ENCODE measurements at regions of chrX and their contacts with region 1.

Region 1: DNA sequence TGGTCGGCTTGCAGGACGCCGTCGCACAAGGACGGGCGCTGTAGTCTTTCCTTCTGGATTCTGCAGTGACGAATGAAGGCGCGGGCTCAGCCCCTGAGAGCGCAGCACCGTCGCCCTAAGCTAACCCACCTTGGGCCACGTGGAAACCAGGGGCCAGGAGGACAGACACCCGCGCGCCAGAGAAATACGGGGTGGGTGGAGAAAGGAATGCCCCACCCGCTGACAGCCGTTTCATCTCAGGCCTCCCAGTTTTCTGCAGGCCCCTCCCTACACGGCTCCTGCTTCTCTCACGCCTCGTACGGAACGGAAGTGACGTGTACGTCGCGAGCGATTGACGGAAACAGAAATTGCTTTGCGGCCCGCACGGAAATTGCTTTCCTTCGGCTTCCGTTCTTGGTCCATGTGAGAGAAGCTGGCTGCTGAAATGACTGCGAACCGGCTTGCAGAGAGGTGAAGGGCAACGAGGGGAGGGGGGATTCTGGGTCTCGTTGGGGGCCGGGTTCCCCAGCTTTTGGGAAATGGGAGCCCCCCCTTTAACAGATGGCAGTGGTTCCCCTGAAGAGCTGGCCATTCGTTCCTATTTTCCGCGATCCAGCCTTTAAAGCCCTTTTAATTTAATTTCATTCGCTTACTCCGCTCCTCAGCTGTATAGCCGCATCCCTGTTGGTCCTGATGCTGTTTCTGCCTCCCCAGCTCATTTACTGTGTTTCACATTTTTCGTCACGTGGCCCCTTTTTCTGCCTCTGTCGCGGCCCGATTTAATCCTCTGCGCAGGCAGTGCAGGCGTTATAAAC is at the start of gene UTP14A:
- DNase-seq: peak; percentile 96
- total RNA-seq, gene UTP14A: 13.2 to 14.3 TPM

Region 2: DNA sequence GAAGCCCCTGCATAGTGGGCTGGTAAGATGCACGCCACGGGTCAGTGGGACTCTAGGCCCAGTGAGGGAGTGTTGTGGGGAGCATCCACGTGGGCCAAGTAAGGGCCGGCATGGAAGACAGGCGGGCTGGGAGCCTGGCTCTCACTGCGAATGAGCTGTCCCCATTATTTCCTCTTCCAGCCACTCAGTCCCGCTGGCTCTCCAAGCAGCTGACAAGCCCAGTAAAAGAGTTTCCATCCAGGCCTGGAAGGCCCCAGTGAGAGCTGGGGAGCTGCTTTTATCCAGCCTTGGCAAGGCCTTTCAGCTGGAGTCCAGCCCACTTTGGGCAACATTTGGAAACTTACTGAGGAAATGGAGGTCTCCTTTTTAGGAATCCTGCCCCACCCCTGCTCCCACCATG is 276.1 kb before region 1 on chrX:
- intact Hi-C with region 1: loop called in 1 of 2 experiments (anchors 5 kb)
- DNase-seq: no peak

Region 3: DNA sequence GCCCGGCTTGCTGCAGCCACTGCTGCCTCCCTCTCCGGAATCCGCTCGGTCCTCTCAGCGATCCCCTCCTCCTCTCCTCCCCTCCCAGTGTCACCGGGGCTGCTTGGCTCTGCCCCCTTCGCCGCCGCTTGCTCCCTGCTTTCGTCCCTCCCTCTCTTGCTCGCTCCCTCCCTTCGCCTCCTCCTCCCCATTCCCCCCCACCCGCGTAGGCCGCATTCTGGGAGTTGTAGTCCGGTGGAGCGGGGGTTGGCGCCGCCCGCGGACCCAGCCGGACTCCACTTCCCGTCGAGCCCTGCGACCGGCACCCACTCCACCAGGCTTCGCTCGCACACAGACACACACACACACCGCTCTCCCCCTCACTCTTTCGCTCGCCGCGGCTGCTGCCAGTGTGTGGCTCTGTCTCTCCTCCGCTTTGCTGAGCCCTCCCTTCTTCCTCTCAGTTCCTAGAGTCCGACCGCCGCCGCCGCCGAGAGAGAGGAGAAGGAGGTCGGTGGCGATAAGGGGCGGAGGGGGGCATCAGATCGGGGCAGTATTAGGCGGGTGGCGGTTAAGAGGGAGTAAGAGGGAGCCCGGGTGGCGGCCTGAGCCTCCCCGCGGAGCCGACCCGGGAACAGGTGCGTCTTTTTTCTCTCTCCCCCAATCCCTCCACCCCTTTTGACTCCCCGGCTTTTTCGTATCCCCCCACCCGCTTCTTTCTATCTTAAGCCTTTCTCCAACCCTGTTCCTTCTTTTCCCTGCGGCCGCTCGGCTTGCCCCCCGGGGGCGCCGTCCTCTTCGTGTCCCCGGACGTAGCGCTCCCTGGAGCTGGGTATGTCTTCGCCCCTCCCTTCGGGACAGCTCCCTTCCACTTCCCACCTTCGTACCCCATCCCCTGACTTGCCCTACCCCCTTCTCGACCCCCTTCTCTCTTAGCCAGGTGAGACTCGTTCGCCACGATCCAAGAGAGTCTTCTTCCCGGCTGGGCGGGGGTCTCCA is 76.6 kb after region 1 on chrX and contains the start of gene BCORL1:
- intact Hi-C with region 1: no loop called
- DNase-seq: peak; percentile 96
- total RNA-seq, gene BCORL1: 14.8 to 17.7 TPM

Region 4: GRCh38 chrX:130933358-130933757 is 1027.4 kb after region 1 on chrX:
- intact Hi-C with region 1: no loop called
- DNase-seq: no peak